Activated T-helper 1 cell treated with anti-CD3 and anti-CD28 coated beads, Interleukin-12 subunit alpha, Interleukin-12 subunit beta, Interleukin-2, Interleukin-4 antibody, amounts not matched to agents 30 ng/mL and 10 ng/mL and 1 ng/mL, durations not matched to agents 14 hours and 24 hours and 36 hours (primary cell): ENCODE measurements at regions of chr9 and their contacts with region 1.

Region 1: GRCh38 chr9:131839281-131840084 is 99.6 kb upstream of the RAPGEF1 start:
- DNase-seq: peak; percentile 71
- H3K4me3 Mint-ChIP-seq: peak overlapping the region; percentile 55
- H3K27ac Mint-ChIP-seq: peak overlapping the region; percentile 99
- H3K4me1 Mint-ChIP-seq: peaks cover 32% of the 10 kb centered on the region
- H3K27me3 Mint-ChIP-seq: no peaks in the 10 kb centered on the region

Region 2: DNA sequence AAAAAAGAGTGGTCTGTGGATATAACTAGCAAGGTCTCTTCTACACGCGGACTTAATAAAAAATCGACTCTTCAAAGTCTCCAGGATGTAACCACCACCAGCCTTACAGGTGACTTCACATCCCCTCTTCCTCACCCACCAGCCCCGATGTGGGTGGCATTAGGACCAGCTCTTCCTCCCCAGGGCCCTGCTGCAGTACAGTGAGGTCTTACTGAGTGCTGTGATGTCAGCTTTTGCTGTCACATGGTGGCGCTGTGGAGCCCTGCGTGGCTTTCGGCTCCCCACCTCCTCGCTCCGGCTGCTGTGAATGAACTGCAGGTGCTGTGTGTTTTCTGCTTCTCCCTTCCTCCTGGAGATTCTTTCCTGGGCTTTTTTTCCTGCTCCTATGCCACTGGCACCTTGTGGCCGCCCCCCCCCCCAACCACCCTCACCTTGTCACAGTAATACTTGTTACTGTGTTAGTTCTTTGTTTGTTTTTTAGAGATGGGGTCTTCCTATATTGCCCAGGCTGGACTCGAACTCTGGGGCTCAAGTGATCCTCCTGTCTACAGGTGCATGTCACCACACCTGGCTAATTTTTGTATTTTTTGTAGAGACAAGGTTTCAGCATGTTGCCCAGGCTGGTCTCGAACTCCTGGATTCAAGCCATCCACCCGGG is 83.8 kb before region 1 on chr9:
- intact Hi-C with region 1: loop called (anchors 5 kb)
- DNase-seq: peak; percentile 76
- H3K4me3 Mint-ChIP-seq: no peak overlapping the region
- H3K27ac Mint-ChIP-seq: peak overlapping the region; percentile 29
- H3K4me1 Mint-ChIP-seq: peaks cover 21% of the 10 kb centered on the region
- H3K27me3 Mint-ChIP-seq: peaks cover 32% of the 10 kb centered on the region

Region 3: DNA sequence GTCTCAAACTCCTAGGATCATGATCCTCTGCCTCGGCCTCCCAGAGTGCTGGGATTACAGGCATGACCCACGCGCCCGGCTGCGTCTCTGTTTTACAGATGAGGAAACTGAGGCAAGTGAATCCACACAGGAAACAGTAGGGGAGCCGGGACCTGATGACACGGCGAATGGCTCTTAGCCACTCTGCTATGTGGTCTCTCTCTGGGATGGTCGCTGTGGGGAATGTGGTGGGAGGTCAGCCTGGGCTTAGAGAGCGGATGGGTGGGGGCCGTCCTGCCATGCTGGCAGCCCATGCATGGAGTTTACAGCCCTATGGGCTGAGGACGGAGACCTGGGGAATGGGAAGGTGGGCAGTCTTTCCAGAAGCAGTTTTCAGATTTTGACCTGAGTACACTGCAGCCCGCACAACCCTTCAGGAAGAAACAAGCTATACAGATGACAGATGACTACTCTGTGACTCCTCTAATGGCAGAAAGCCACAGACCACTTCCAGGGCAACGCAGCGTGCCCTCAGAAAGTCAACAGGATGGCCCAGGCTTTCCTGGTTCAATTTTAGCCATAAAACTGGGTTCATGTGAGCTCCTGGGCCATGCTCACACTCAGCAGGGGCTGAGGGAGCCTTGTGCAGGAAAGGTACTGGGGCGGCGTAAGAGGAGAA is 36.5 kb after region 1 on chr9:
- intact Hi-C with region 1: loop called (anchors 1 kb)
- DNase-seq: peak; percentile 2
- H3K4me3 Mint-ChIP-seq: peak overlapping the region; percentile 33
- H3K27ac Mint-ChIP-seq: peak overlapping the region; percentile 69
- H3K4me1 Mint-ChIP-seq: peaks cover 21% of the 10 kb centered on the region
- H3K27me3 Mint-ChIP-seq: no peaks in the 10 kb centered on the region

Region 4: GRCh38 chr9:132006677-132007370 is 167.3 kb after region 1 on chr9:
- intact Hi-C with region 1: loop called (anchors 5 kb)
- DNase-seq: peak; percentile 50
- H3K4me3 Mint-ChIP-seq: peak overlapping the region; percentile 58
- H3K27ac Mint-ChIP-seq: peak overlapping the region; percentile 62
- H3K4me1 Mint-ChIP-seq: peaks cover 66% of the 10 kb centered on the region
- H3K27me3 Mint-ChIP-seq: peaks cover 2% of the 10 kb centered on the region